ENCODE measurements at regions of chr17 and their contacts with region 1.

Region 1: GRCh38 chr17:47663912-47664625 is 14.3 kb downstream of the KPNB1 start:
- DNase-seq: peak; percentile 70
- H3K4me3 ChIP-seq: no peak overlapping the region; a peak in 1 of 4 replicates
- H3K27ac ChIP-seq: no peak overlapping the region
- H3K4me1 ChIP-seq: no peaks in the 10 kb centered on the region
- H3K27me3 ChIP-seq: no peaks in the 10 kb centered on the region
- CTCF ChIP-seq: peak; percentile 98
- EP300 ChIP-seq: no peak
- RAD21 ChIP-seq: peak; percentile 81

Region 2: GRCh38 chr17:47649153-47649971 is 14.7 kb before region 1 on chr17 and contains the start of gene KPNB1:
- CTCF ChIA-PET with region 1: interaction called, 113 read pairs
- POLR2A ChIA-PET with region 1: interaction called, 10 read pairs
- DNase-seq: peak; percentile 95
- H3K4me3 ChIP-seq: peak within 1 kb of the TSS; percentile 67 to 80
- H3K27ac ChIP-seq: peak within 1 kb of the TSS; percentile 71 to 89
- H3K4me1 ChIP-seq: peaks cover 8 to 18% of the 10 kb centered on the region in 2 experiments
- H3K27me3 ChIP-seq: no peaks in the 10 kb centered on the region
- CTCF ChIP-seq: no peak
- EP300 ChIP-seq: peak; percentile 7 to 30; a peak in 2 of 4 replicates
- RAD21 ChIP-seq: no peak
- polyA plus RNA-seq, gene KPNB1: 89.5 and 142 TPM in 2 replicates

Region 3: GRCh38 chr17:47687748-47688147 is 23.7 kb after region 1 on chr17:
- CTCF ChIA-PET with region 1: interaction called, 167 read pairs
- POLR2A ChIA-PET with region 1: interaction called, 4 read pairs
- DNase-seq: peak; percentile 27
- H3K4me3 ChIP-seq: no peak overlapping the region
- H3K27ac ChIP-seq: peak overlapping the region; percentile 5 to 52; a peak in 1 of 4 replicates
- H3K4me1 ChIP-seq: peaks cover 7 to 23% of the 10 kb centered on the region in 2 experiments; a peak in 2 of 4 replicates
- H3K27me3 ChIP-seq: no peaks in the 10 kb centered on the region
- CTCF ChIP-seq: no peak
- EP300 ChIP-seq: no peak
- RAD21 ChIP-seq: no peak

Region 4: DNA sequence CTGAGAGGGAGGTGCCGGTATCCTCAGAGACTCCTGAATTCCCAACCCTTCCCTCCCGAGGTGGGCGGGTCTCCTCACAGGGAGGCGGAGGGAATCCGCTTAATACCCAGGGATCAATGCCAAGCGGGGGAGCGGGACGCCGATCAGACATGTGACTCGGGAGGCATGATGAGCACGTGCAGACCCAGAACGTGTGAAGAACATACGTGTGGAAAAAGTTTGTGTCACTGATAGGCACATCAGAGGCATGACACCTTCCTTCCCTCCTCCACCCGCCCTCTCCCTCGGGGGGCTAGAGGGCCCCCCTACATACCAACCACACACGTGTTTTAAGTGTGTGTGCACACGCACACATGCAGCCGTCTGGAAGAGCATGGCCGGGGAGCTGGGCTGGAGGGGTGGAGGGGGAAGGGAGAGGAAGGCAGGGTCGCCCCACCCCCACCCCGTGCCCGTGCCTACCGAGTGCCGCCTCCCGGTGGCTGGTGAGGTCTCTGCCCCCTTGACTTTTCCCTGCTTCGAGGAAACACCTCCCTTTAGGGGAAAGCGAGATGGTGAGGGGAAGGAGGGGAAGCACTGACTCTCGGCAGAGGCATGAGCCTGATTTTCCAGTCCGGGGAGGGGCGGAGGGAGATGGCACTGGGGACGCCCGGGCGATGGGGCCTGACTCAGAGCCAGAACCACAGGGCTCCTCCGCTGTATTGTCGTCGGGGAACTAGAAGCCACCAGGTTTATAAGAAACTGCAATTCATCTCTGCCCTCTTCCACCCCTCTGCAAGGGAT is 56.9 kb after region 1 on chr17:
- CTCF ChIA-PET with region 1: interaction called, 12 read pairs
- POLR2A ChIA-PET with region 1: no interaction called
- DNase-seq: peak; percentile 70
- H3K4me3 ChIP-seq: no peak overlapping the region
- H3K27ac ChIP-seq: no peak overlapping the region
- H3K4me1 ChIP-seq: peaks cover 7 to 27% of the 10 kb centered on the region in 2 experiments; a peak in 3 of 4 replicates
- H3K27me3 ChIP-seq: peaks cover 77% of the 10 kb centered on the region
- CTCF ChIP-seq: peak; percentile 25
- EP300 ChIP-seq: no peak
- RAD21 ChIP-seq: no peak

Region 5: GRCh38 chr17:47742319-47743181 is 78.5 kb after region 1 on chr17:
- CTCF ChIA-PET with region 1: interaction called, 46 read pairs
- POLR2A ChIA-PET with region 1: no interaction called
- DNase-seq: peak; percentile 95
- H3K4me3 ChIP-seq: no peak overlapping the region; a peak in 1 of 4 replicates
- H3K27ac ChIP-seq: no peak overlapping the region
- H3K4me1 ChIP-seq: peaks cover 0 to 6% of the 10 kb centered on the region in 2 experiments; a peak in 1 of 4 replicates
- H3K27me3 ChIP-seq: peaks cover 86% of the 10 kb centered on the region
- CTCF ChIP-seq: peak; percentile 61
- EP300 ChIP-seq: no peak
- RAD21 ChIP-seq: peak; percentile 88

Region 6: GRCh38 chr17:47802341-47803022 is 138.4 kb after region 1 on chr17:
- CTCF ChIA-PET with region 1: interaction called, 27 read pairs
- POLR2A ChIA-PET with region 1: no interaction called
- DNase-seq: peak; percentile 90
- H3K4me3 ChIP-seq: no peak overlapping the region
- H3K27ac ChIP-seq: no peak overlapping the region
- H3K4me1 ChIP-seq: no peaks in the 10 kb centered on the region
- H3K27me3 ChIP-seq: 0 out of 2 replicates have a peak, but pooled peaks cover 14% of the 10 kb centered on the region
- CTCF ChIP-seq: peak; percentile 78
- EP300 ChIP-seq: no peak
- RAD21 ChIP-seq: peak; percentile 90

Region 7: DNA sequence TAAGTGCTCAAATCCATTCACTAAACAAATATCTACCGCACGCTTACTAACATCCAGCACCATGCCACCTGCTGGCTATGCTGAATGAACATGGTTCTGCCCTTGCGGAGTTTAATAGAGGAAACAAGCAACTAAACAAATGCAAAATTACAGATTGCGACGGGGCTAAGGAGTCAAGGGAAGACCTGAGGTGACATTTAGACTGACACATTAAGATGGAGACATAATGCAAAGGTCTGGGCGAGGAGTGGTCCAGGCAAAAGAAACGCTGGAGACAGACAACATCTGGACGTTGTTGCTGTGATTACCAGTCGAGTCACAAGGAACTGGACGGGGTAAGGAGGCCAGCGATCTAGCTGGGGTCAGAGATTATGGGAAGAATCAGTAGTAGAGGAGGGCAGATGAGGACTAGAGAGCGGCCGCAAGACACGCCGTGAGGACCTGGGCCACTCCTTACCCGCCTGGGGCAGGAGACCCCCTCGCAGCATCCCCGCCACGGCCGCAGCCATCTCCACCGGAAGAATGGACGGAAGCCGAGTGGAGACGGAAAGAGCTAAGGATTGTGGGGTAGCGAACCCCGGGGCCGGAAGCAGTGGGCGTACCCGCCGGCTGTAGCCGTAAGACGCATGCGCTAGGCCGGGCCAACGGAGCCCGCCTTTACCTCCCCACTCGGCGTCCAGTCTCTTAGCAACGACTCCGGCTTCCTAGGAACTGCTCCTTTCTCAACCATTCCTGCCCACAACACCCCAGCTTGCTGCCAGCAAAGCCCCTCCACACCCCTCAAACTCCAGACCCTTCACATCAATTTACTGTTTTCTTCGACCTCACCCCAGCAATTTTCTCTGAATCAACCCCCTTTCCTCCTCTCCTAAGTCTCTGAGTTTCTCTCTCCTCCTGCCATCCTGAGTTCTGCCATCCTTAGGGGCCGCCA is 167.2 kb after region 1 on chr17 and contains the starts of genes LRRC46 and MRPL10:
- CTCF ChIA-PET with region 1: no interaction called
- POLR2A ChIA-PET with region 1: no interaction called
- DNase-seq: peak; percentile 100
- H3K4me3 ChIP-seq: peak within 1 kb of the TSS; percentile 77 to 93
- H3K27ac ChIP-seq: peak within 1 kb of the TSS; percentile 76 to 88
- H3K4me1 ChIP-seq: peaks cover 9 to 15% of the 10 kb centered on the region in 2 experiments; a peak in 2 of 4 replicates
- H3K27me3 ChIP-seq: no peaks in the 10 kb centered on the region
- CTCF ChIP-seq: peak; percentile 77
- EP300 ChIP-seq: peak in 1 of 2 experiments; percentile 2; a peak in 1 of 4 replicates
- RAD21 ChIP-seq: peak; percentile 28; the same call in 1 of the 2 replicates
- polyA plus RNA-seq, gene LRRC46: 1.6 and 1.8 TPM in 2 replicates
- polyA plus RNA-seq, gene MRPL10: 133 and 136 TPM in 2 replicates

Measured in SK-N-SH (cell line).